ENCODE measurements at regions of chr12 and their contacts with region 1.

Region 1: DNA sequence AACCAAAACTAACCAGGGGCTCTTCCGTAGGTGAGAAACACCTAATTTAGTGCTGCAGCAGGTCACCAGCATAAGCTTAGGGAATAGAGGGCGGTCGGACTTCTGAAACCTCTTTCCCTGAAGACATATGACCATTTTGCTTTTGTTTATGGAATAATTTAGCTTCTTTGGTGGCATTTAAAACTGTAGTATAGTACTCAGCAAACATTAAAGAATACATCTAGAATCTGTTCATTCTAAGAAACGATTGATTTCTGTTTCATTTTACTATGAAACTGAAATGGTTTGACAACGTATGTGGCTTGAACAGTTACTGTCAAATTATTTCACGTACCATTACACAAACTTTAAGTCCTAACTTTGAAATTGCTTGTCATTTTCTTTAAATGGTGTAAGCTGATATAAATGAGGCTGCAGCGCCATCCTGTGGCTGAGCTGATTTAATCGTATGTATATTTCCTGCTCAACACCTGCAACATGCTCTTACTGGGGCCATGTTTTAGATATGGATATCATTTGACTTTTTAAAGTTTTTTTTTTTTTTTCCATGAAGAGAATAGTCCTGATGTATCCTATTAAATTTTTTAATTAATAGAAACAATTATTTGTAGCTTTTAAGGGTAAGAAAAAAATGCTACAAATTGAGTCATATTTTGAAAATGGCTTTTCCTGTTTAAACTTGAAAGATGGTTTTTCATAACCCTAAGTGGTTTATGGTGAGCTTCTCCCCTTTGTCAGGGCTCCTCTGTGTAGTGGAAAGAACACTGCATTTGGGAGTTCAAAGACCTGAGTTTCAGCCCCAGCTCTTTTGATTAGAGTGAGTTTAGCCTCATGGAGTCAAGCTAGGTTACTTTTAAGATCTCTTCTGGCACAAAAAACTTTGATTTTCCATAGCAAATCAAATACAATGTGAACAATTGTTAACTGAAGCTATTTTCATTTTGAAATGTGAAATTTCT is 27.4 kb downstream of the CFAP54 start:
- DNase-seq: peak; percentile 94
- H3K4me3 ChIP-seq: no peak overlapping the region
- H3K27ac ChIP-seq: peak overlapping the region; percentile 69
- H3K4me1 ChIP-seq: peaks cover 16% of the 10 kb centered on the region
- H3K27me3 ChIP-seq: no peaks in the 10 kb centered on the region
- CTCF ChIP-seq: peak; percentile 29 to 35
- POLR2A ChIP-seq: no peak

Region 2: DNA sequence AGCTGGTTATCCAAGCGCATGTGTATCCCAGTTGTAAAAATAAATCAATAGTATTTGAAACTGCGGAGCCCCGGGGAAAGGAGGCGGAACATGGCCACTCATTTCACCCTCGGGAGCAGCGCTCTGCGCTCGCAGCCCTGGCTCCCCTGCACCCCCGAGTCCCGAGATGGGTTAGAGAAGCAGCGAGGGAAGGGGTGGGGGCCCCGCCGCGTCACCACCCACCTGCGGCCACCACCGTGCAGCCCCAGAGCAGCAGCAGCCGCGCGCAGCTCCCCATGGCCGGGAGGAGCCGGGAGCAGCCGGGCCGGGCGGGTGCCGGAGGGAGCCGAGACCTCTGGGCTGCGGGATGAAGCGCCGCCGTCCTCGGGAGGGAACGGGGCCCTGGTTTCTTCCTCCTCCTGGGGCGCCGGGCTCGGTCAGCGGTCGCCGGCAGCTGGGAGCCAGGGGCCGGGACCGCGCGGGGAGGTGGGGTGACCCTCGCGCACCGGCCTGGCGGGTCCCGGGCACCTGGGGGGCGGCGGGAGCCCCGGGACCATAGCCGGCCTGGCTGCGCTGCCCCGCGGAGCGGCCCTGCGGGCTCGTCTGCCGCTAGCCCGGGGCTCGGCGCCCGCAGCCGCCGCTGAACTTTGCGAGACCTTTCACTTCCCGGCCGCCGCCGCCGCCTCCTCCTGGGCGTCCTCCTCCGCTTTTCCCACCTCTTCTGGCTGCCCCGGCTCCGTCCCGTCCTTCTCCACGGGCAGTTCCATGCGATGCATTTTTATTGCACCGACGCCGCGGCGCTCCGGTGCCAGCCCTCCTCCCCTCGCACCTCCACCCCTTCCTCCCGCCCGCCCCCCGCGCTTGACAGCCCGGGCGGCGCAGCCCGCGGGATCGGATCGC is 726.5 kb before region 1 on chr12 and contains the start of gene NTN4:
- CTCF ChIA-PET with region 1: no interaction called
- POLR2A ChIA-PET with region 1: no interaction called
- dilution Hi-C with region 1: no loop called
- intact Hi-C with region 1: no loop called
- DNase-seq: peak; percentile 67
- H3K4me3 ChIP-seq: peak within 1 kb of the TSS; percentile 79 to 93 (median 89)
- H3K27ac ChIP-seq: peak within 1 kb of the TSS; percentile 83
- H3K4me1 ChIP-seq: peaks cover 38% of the 10 kb centered on the region
- H3K27me3 ChIP-seq: no peaks in the 10 kb centered on the region
- CTCF ChIP-seq: no peak
- POLR2A ChIP-seq: peak; percentile 66
- total RNA-seq, gene NTN4: 105 and 120 TPM in 2 replicates

Region 3: DNA sequence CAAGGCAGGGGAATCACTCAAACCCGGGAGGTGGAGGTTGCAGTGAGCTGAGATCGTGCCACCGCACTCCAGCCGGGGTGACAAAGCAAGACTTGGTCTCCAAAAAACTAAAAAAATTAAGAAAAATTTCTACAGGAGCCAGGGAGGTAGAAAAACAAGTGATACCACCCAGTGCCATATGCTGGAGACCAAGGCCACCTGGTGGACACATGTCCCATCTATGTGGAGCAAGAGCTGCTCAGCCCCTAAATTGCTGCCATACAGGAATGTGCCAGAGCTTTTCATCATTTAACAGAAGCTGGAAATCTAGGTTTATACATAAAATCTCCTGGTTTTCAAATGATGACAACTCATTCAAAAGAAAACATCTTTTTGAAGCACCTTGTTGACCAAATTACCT is 383.9 kb before region 1 on chr12:
- CTCF ChIA-PET with region 1: no interaction called
- POLR2A ChIA-PET with region 1: no interaction called
- dilution Hi-C with region 1: no loop called
- intact Hi-C with region 1: loop called (anchors 10 kb)
- DNase-seq: peak; percentile 48
- H3K4me3 ChIP-seq: no peak overlapping the region
- H3K27ac ChIP-seq: no peak overlapping the region
- H3K4me1 ChIP-seq: peaks cover 29% of the 10 kb centered on the region
- H3K27me3 ChIP-seq: no peaks in the 10 kb centered on the region
- CTCF ChIP-seq: peak; percentile 15 to 42
- POLR2A ChIP-seq: no peak

Region 4: GRCh38 chr12:96258104-96258961 is 258.4 kb before region 1 on chr12:
- CTCF ChIA-PET with region 1: interaction called, 12 read pairs
- POLR2A ChIA-PET with region 1: no interaction called
- dilution Hi-C with region 1: no loop called
- intact Hi-C with region 1: loop called (anchors 2 kb)
- DNase-seq: peak; percentile 70
- H3K4me3 ChIP-seq: no peak overlapping the region
- H3K27ac ChIP-seq: peak overlapping the region; percentile 41
- H3K4me1 ChIP-seq: peaks cover 80% of the 10 kb centered on the region
- H3K27me3 ChIP-seq: no peaks in the 10 kb centered on the region
- CTCF ChIP-seq: no peak
- POLR2A ChIP-seq: no peak

Region 5: DNA sequence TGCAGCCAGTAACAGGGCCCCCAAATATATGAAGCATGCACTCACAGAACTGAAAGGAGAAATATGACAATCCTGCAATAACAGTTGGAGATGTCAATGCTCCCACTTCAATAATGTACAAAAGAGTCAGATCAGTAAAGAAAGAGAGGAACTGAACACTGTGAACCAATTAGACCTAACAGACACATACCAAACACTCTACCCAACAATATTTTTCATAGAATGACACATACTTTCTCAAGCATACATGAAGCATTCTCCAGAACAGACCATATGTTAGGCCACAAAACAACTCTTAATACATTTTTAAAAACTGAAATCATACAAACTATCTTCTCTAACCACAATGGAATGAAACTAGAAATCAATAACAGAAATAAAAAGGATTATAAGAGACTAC is 242.4 kb before region 1 on chr12:
- CTCF ChIA-PET with region 1: interaction called, 12 read pairs
- POLR2A ChIA-PET with region 1: no interaction called
- dilution Hi-C with region 1: no loop called
- intact Hi-C with region 1: no loop called
- DNase-seq: no peak
- H3K4me3 ChIP-seq: no peak overlapping the region
- H3K27ac ChIP-seq: no peak overlapping the region
- H3K4me1 ChIP-seq: no peaks in the 10 kb centered on the region
- H3K27me3 ChIP-seq: no peaks in the 10 kb centered on the region
- CTCF ChIP-seq: no peak
- POLR2A ChIP-seq: no peak

Region 6: GRCh38 chr12:96489103-96490056 is 27.4 kb before region 1 on chr12 and contains the start of gene CFAP54:
- CTCF ChIA-PET with region 1: interaction called, 20 read pairs
- POLR2A ChIA-PET with region 1: interaction called, 4 read pairs
- dilution Hi-C with region 1: no loop called
- intact Hi-C with region 1: loop called (anchors 1 kb)
- DNase-seq: peak; percentile 96
- H3K4me3 ChIP-seq: peak within 1 kb of the TSS; percentile 30 to 66 (median 53)
- H3K27ac ChIP-seq: peak within 1 kb of the TSS; percentile 88
- H3K4me1 ChIP-seq: peaks cover 57% of the 10 kb centered on the region
- H3K27me3 ChIP-seq: no peaks in the 10 kb centered on the region
- CTCF ChIP-seq: peak; percentile 92
- POLR2A ChIP-seq: no peak
- total RNA-seq, gene CFAP54: 21.5 and 26.9 TPM in 2 replicates